ENCODE measurements at regions of chr2 and their contacts with region 1.

Region 1: GRCh38 chr2:31694444-31694843 is 113.7 kb upstream of the SRD5A2 start:
- DNase-seq: peak; percentile 16
- ATAC-seq: peak; percentile 73
- H3K4me3 ChIP-seq: no peak overlapping the region
- H3K27ac ChIP-seq: no peak overlapping the region
- H3K4me1 ChIP-seq: no peaks in the 10 kb centered on the region
- H3K27me3 ChIP-seq: no peaks in the 10 kb centered on the region
- CTCF ChIP-seq: peak; percentile 29 to 52 (median 44); a peak in 4 of 6 replicates
- POLR2A ChIP-seq: no peak
- RAD21 ChIP-seq: peak; percentile 70

Region 2: GRCh38 chr2:31831585-31831984 is 137.1 kb after region 1 on chr2:
- CTCF ChIA-PET with region 1: no interaction called
- POLR2A ChIA-PET with region 1: no interaction called
- RAD21 ChIA-PET with region 1: no interaction called
- intact Hi-C with region 1: loop called (anchors 10 kb)
- DNase-seq: no peak
- ATAC-seq: no peak
- H3K4me3 ChIP-seq: no peak overlapping the region
- H3K27ac ChIP-seq: no peak overlapping the region
- H3K4me1 ChIP-seq: no peaks in the 10 kb centered on the region
- H3K27me3 ChIP-seq: no peaks in the 10 kb centered on the region
- CTCF ChIP-seq: no peak
- POLR2A ChIP-seq: no peak
- RAD21 ChIP-seq: no peak

Region 3: GRCh38 chr2:32212295-32212694 is 517.9 kb after region 1 on chr2:
- CTCF ChIA-PET with region 1: no interaction called
- POLR2A ChIA-PET with region 1: no interaction called
- RAD21 ChIA-PET with region 1: no interaction called
- intact Hi-C with region 1: loop called (anchors 2 kb)
- DNase-seq: no peak
- ATAC-seq: no peak
- H3K4me3 ChIP-seq: no peak overlapping the region
- H3K27ac ChIP-seq: no peak overlapping the region
- H3K4me1 ChIP-seq: no peaks in the 10 kb centered on the region
- H3K27me3 ChIP-seq: no peaks in the 10 kb centered on the region
- CTCF ChIP-seq: no peak
- POLR2A ChIP-seq: no peak
- RAD21 ChIP-seq: peak; percentile 47